ENCODE measurements at regions of chr4 and their contacts with region 1.

Region 1: DNA sequence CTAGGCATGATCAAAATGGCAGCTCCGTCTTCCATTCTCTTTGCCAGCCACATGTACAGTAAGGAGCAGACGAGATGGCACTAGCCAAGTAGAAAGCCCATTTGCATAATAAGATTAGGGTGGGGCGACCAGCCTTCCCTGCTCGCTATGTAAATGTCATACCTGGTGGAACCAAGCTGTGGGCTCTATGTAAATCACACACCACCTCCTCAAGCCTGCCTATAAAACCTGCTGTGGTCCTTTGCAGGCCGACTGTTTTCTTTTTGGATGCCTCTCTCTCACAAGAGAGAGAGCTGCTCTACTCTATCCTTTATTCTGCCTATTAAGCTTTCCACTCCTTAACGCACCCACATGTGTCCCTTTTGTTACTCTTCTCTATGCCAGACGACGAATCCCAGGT is 1472.7 kb downstream of the ARAP2 start:
- DNase-seq: no peak
- H3K4me3 ChIP-seq: no peak overlapping the region
- H3K27ac ChIP-seq: no peak overlapping the region
- H3K4me1 ChIP-seq: no peaks in the 10 kb centered on the region
- H3K27me3 ChIP-seq: no peaks in the 10 kb centered on the region
- CTCF ChIP-seq: no peak

Region 2: DNA sequence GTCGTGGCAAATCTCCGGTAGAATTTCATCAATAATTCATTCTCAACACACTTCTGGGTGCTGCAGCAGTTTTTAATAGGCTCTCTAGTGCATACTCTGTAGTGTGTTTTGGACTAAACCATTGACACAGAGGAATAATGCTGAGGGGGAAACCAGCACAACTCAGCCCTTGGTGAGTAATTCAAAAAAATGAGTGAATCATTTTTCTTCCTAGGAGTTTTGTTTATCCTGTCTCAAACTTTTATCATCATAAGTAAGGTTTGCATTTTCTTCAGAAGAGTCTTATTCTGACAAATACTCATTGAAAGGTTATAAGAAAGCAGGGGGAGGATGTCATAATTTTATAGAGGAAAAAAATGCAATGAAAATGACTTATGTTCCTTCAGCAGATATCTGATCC is 1508.8 kb before region 1 on chr4:
- intact Hi-C with region 1: no loop called
- DNase-seq: no peak
- H3K4me3 ChIP-seq: no peak overlapping the region
- H3K27ac ChIP-seq: no peak overlapping the region
- H3K4me1 ChIP-seq: no peaks in the 10 kb centered on the region
- H3K27me3 ChIP-seq: no peaks in the 10 kb centered on the region
- CTCF ChIP-seq: no peak

Region 3: DNA sequence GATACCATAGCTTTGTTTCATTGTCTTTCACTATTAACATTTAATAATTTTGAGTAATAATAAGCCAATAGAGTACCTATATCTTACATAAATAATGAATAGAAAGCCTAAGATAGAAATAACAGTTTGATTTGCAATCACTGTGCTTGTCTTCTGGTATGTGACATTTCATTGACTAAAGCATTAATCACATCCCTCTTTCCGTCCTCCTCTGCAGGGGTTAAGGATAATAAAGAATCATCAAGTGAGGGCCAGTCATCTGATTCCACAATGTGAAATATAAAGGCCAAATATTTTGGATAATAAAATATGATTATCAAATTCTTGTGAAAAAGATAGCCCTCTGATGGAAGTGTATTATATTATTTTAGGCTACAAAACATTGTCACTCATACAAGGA is 600.7 kb before region 1 on chr4:
- intact Hi-C with region 1: no loop called
- DNase-seq: no peak
- H3K4me3 ChIP-seq: no peak overlapping the region
- H3K27ac ChIP-seq: no peak overlapping the region
- H3K4me1 ChIP-seq: no peaks in the 10 kb centered on the region
- H3K27me3 ChIP-seq: no peaks in the 10 kb centered on the region
- CTCF ChIP-seq: no peak

Region 4: GRCh38 chr4:34534916-34535315 is 236.7 kb before region 1 on chr4:
- intact Hi-C with region 1: no loop called
- DNase-seq: no peak
- H3K4me3 ChIP-seq: no peak overlapping the region
- H3K27ac ChIP-seq: no peak overlapping the region
- H3K4me1 ChIP-seq: no peaks in the 10 kb centered on the region
- H3K27me3 ChIP-seq: no peaks in the 10 kb centered on the region
- CTCF ChIP-seq: no peak

Region 5: GRCh38 chr4:34826660-34827059 is 55.0 kb after region 1 on chr4:
- intact Hi-C with region 1: loop called (anchors 5 kb)
- DNase-seq: no peak
- H3K4me3 ChIP-seq: no peak overlapping the region
- H3K27ac ChIP-seq: no peak overlapping the region
- H3K4me1 ChIP-seq: no peaks in the 10 kb centered on the region
- H3K27me3 ChIP-seq: no peaks in the 10 kb centered on the region
- CTCF ChIP-seq: no peak